T-cell (primary cell): ENCODE measurements at regions of chr6 and their contacts with region 1.

Region 1: DNA sequence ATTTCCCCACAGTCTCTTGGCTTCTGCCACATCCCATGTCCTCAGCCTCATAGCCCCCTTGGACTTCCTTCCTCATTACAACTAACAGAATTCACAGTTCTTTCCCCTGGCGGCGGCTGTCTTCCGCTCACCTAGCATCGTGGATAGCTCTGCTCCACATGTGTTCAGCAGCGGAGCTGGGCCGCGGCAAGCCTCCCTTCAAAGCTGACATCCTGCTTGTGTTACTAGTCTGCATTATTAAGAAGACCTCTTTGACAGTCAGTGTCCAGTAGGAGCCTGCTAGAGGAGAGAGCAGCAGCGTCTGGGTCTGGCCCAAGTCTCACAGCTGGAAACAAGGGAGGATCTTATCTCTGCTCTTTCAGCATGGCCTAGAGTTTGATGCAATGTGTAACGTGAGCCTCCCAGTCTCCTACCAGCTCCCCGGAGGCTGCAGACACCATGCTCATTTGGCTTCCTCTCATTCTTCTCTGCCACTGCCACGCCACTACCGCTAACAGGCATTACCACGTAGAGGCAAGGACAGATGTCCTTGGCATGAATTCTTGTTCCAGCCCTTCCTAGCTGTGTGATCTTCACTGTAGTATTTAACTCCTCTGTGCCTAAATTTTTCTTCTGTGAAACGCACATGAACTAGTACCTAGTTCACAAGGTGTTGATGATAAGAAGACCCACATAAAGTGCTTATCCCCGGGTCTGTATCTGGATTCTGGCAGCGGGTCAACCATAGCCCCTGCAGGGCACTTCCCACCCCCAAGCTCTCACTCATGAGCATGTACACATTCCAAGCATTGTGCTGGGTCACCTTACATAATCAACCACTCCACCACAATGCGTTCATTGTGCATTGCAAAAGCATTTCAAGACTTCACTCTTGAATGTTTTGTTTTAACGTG is 107.1 kb upstream of the BACH2 start:
- DNase-seq: no peak
- ATAC-seq: no peak
- H3K4me3 ChIP-seq: no peak overlapping the region
- H3K4me3 Mint-ChIP-seq: peak overlapping the region in 1 of 3 donors; percentile 49
- H3K27ac ChIP-seq: peak overlapping the region; percentile 69
- H3K27ac Mint-ChIP-seq: peak overlapping the region; percentile 82 to 91
- H3K4me1 ChIP-seq: peaks cover 5 to 54% of the 10 kb centered on the region in 2 experiments
- H3K4me1 Mint-ChIP-seq: peaks cover 41 to 69% (median 64%) of the 10 kb centered on the region in 3 donors
- H3K27me3 ChIP-seq: no peaks in the 10 kb centered on the region
- H3K27me3 Mint-ChIP-seq: no peaks in the 10 kb centered on the region

Region 2: GRCh38 chr6:90168693-90169131 is 235.0 kb before region 1 on chr6:
- CTCF ChIA-PET with region 1: no interaction called
- POLR2A ChIA-PET with region 1: no interaction called
- DNase-seq: no peak
- ATAC-seq: no peak
- H3K4me3 ChIP-seq: no peak overlapping the region
- H3K4me3 Mint-ChIP-seq: no peak overlapping the region
- H3K27ac ChIP-seq: no peak overlapping the region
- H3K27ac Mint-ChIP-seq: no peak overlapping the region
- H3K4me1 ChIP-seq: peaks cover 2 to 22% of the 10 kb centered on the region in 2 experiments
- H3K4me1 Mint-ChIP-seq: peaks cover 48 to 63% (median 49%) of the 10 kb centered on the region in 3 donors
- H3K27me3 ChIP-seq: no peaks in the 10 kb centered on the region
- H3K27me3 Mint-ChIP-seq: no peaks in the 10 kb centered on the region

Region 3: GRCh38 chr6:90242650-90243049 is 161.1 kb before region 1 on chr6:
- CTCF ChIA-PET with region 1: no interaction called
- POLR2A ChIA-PET with region 1: interaction called in 1 of 2 experiments, 15 read pairs
- DNase-seq: no peak
- ATAC-seq: no peak
- H3K4me3 ChIP-seq: no peak overlapping the region
- H3K4me3 Mint-ChIP-seq: no peak overlapping the region
- H3K27ac ChIP-seq: no peak overlapping the region
- H3K27ac Mint-ChIP-seq: peak overlapping the region in 1 of 2 donors; percentile 69
- H3K4me1 ChIP-seq: peaks cover 16 to 45% of the 10 kb centered on the region in 2 experiments
- H3K4me1 Mint-ChIP-seq: peaks cover 50 to 56% (median 52%) of the 10 kb centered on the region in 3 donors
- H3K27me3 ChIP-seq: no peaks in the 10 kb centered on the region
- H3K27me3 Mint-ChIP-seq: no peaks in the 10 kb centered on the region

Region 4: DNA sequence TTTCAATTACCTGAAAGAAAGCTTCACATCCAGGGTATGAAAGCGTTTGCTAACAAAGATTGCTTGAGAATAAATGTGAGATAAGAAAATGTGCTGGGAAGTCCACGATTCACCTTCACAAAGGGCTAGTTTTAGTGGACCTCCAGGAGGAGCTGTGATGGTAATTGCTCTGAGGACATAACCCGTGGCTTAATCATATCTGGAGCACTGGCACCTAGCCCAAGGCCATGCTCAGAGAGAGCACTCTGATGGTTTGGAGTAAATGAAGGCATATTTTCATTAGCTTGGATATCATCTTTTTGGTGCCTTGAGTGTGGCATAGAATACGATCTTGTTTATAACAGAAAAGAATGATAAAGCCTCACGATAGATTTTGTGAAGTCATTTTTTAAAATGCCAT is 60.2 kb before region 1 on chr6:
- CTCF ChIA-PET with region 1: interaction called in 1 of 2 experiments, 10 read pairs
- POLR2A ChIA-PET with region 1: no interaction called
- DNase-seq: no peak
- ATAC-seq: no peak
- H3K4me3 ChIP-seq: no peak overlapping the region
- H3K4me3 Mint-ChIP-seq: no peak overlapping the region
- H3K27ac ChIP-seq: no peak overlapping the region
- H3K27ac Mint-ChIP-seq: no peak overlapping the region
- H3K4me1 ChIP-seq: no peaks in the 10 kb centered on the region
- H3K4me1 Mint-ChIP-seq: no peaks in the 10 kb centered on the region
- H3K27me3 ChIP-seq: peaks cover 0 to 4% of the 10 kb centered on the region in 2 experiments
- H3K27me3 Mint-ChIP-seq: peaks cover 5 to 10% of the 10 kb centered on the region in 2 donors